Calu3 (cell line): ENCODE measurements at regions of chr19 and their contacts with region 1.

Region 1: GRCh38 chr19:44653977-44654774 is 10.5 kb downstream of the PVR start:
- DNase-seq: peak; percentile 91
- H3K4me3 Mint-ChIP-seq: peak overlapping the region; percentile 33
- H3K27ac Mint-ChIP-seq: peak overlapping the region; percentile 43
- H3K4me1 Mint-ChIP-seq: peaks cover 73% of the 10 kb centered on the region
- H3K27me3 Mint-ChIP-seq: no peaks in the 10 kb centered on the region
- CTCF ChIP-seq: peak; percentile 88

Region 2: DNA sequence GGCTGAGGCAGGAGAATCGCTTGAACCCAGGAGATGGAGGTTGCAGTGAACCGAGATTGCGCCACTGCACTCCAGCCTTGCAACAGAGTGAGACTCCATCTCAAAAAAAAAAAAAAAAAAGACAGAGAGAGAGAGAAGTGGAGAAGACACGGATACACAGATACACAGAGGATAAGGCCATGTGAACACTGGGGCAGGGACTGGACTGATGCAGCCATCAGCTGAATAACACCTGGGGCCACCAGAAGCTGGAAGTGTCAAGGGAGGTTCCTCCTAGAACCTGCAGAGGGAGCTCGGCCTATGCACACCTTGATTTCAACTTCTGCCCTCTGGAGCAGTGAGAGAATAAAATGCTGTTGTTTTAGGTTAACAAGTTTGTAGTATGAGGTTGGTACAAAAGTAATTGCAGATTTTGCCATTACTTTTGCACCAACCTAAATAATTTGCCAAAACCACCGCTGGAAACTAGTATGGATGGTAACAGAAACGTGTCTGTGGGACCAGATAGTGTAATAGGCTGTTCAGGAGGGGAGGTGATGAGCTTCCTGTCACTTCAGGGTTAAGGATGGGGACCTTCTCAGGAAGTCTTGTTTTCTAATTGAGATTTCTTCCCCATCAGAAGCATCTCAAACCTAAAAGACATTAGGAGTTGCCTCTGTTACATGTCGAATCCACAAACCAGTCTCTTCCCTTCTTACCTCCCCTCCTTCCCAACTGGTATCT is 77.2 kb before region 1 on chr19:
- CTCF ChIA-PET with region 1: interaction called, 29 read pairs
- intact Hi-C with region 1: loop called (anchors 1 kb)
- DNase-seq: peak; percentile 78
- H3K4me3 Mint-ChIP-seq: no peak overlapping the region
- H3K27ac Mint-ChIP-seq: no peak overlapping the region
- H3K4me1 Mint-ChIP-seq: peaks cover 43% of the 10 kb centered on the region
- H3K27me3 Mint-ChIP-seq: no peaks in the 10 kb centered on the region
- CTCF ChIP-seq: peak; percentile 94

Region 3: GRCh38 chr19:44587963-44588770 is 66.0 kb before region 1 on chr19:
- CTCF ChIA-PET with region 1: interaction called, 24 read pairs
- intact Hi-C with region 1: loop called (anchors 1 kb)
- DNase-seq: peak; percentile 68
- H3K4me3 Mint-ChIP-seq: peak overlapping the region; percentile 59
- H3K27ac Mint-ChIP-seq: peak overlapping the region; percentile 100
- H3K4me1 Mint-ChIP-seq: peaks cover 75% of the 10 kb centered on the region
- H3K27me3 Mint-ChIP-seq: no peaks in the 10 kb centered on the region
- CTCF ChIP-seq: peak; percentile 19

Region 4: GRCh38 chr19:44603201-44603950 is 50.8 kb before region 1 on chr19:
- CTCF ChIA-PET with region 1: no interaction called
- intact Hi-C with region 1: no loop called
- DNase-seq: no peak
- H3K4me3 Mint-ChIP-seq: no peak overlapping the region
- H3K27ac Mint-ChIP-seq: no peak overlapping the region
- H3K4me1 Mint-ChIP-seq: peaks cover 54% of the 10 kb centered on the region
- H3K27me3 Mint-ChIP-seq: no peaks in the 10 kb centered on the region
- CTCF ChIP-seq: no peak

Region 5: GRCh38 chr19:44618640-44619357 is 35.4 kb before region 1 on chr19:
- CTCF ChIA-PET with region 1: no interaction called
- intact Hi-C with region 1: no loop called
- DNase-seq: no peak
- H3K4me3 Mint-ChIP-seq: no peak overlapping the region
- H3K27ac Mint-ChIP-seq: no peak overlapping the region
- H3K4me1 Mint-ChIP-seq: peaks cover 17% of the 10 kb centered on the region
- H3K27me3 Mint-ChIP-seq: no peaks in the 10 kb centered on the region
- CTCF ChIP-seq: no peak